Heart right ventricle (tissue), 16 donors: ENCODE measurements at regions of chr16 and their contacts with region 1.

Region 1: GRCh38 chr16:24668481-24669061 is 60.9 kb upstream of the TNRC6A start:
- DNase-seq: peak in 1 of 2 donors; percentile 10
- ATAC-seq: peak in 7 of 8 donors; percentile 25 to 63 (median 57)
- H3K4me3 ChIP-seq: no peak overlapping the region
- H3K27ac ChIP-seq: peak overlapping the region in 8 of 10 donors; percentile 38 to 78 (median 60)
- H3K4me1 ChIP-seq: peaks cover 0 to 27% (median 14%) of the 10 kb centered on the region in 9 donors
- H3K27me3 ChIP-seq: no peaks in the 10 kb centered on the region
- CTCF ChIP-seq: no peak

Region 2: GRCh38 chr16:24452724-24453123 is 215.8 kb before region 1 on chr16:
- intact Hi-C with region 1: no loop called
- DNase-seq: no peak
- ATAC-seq: no peak
- H3K4me3 ChIP-seq: no peak overlapping the region
- H3K27ac ChIP-seq: no peak overlapping the region
- H3K4me1 ChIP-seq: no peaks in the 10 kb centered on the region
- H3K27me3 ChIP-seq: peaks cover 0 to 15% (median 2%) of the 10 kb centered on the region in 7 donors
- CTCF ChIP-seq: no peak

Region 3: DNA sequence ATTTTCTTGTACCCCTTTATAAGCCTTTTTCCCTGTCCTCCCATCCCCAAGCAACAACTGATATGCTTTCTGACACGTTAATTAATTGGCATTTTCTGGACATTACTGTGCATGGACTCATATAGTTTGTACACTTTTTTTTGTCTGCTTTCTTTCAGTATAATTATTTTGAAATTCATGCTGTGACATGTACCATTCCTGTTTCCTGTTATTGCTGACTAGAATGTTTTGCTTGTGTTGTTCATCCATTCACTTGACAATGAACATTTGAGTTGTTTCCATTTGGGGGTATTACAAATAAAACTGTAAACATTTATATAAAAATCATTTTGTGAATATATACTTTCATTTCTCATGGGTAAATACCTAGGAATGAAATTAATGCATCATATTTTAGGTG is 78.6 kb before region 1 on chr16:
- intact Hi-C with region 1: no loop called
- DNase-seq: no peak
- ATAC-seq: no peak
- H3K4me3 ChIP-seq: no peak overlapping the region
- H3K27ac ChIP-seq: no peak overlapping the region
- H3K4me1 ChIP-seq: no peaks in the 10 kb centered on the region
- H3K27me3 ChIP-seq: no peaks in the 10 kb centered on the region
- CTCF ChIP-seq: no peak

Region 4: DNA sequence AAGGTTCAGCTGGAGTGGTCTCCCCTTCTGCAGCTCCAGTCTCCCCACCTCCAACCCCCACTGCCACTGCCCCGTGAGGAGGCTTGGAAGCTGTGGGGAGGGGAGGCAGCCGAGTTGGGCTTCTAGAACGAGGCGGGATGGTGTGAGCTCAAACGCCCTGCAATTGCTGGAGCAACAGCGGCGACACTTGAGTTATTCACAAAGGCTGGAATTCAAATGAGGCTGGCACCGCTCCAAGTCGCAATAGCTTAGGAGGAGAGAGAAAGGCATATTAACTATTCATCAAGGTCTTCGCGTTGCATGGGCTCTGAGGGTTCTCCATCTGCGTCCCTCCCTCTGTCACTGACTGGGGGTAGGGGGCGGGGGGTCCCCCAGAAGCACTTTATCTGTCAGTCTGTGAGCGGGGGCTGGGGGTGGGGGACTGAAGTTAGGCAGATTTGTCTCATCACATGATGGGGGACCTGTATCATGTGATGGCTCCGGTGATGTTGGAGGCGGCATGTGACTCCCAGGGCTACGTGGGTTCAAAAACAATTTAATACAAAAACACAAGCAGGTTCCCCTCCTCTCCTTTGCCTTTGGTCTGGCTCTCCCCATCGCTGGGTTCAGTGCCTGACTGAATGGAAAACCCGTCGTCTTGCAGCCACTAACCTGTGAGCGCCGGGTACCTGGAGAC is 58.7 kb before region 1 on chr16:
- intact Hi-C with region 1: loop called in 1 of 10 experiments (anchors 5 kb)
- DNase-seq: peak; percentile 11 to 33
- ATAC-seq: peak in 7 of 8 donors; percentile 18 to 49 (median 39)
- H3K4me3 ChIP-seq: peak overlapping the region in 9 of 10 donors; percentile 15 to 47 (median 40)
- H3K27ac ChIP-seq: no peak overlapping the region
- H3K4me1 ChIP-seq: peaks cover 0 to 14% (median 9%) of the 10 kb centered on the region in 9 donors
- H3K27me3 ChIP-seq: peaks cover 0 to 43% (median 23%) of the 10 kb centered on the region in 7 donors
- CTCF ChIP-seq: no peak